ENCODE measurements at regions of chr11 and their contacts with region 1.

Region 1: GRCh38 chr11:66592457-66593302 is at the starts of genes CCDC87 and CCS:
- DNase-seq: peak; percentile 98
- H3K4me3 ChIP-seq: peak within 1 kb of the TSS; percentile 83
- H3K27ac ChIP-seq: peak within 1 kb of the TSS; percentile 74
- H3K4me1 ChIP-seq: 0 out of 2 replicates have a peak, but pooled peaks cover 8% of the 10 kb centered on the region
- H3K27me3 ChIP-seq: no peaks in the 10 kb centered on the region
- total RNA-seq, gene CCDC87: 0.11 and 0.13 TPM in 2 replicates
- total RNA-seq, gene CCS: 28.0 and 29.5 TPM in 2 replicates

Region 2: DNA sequence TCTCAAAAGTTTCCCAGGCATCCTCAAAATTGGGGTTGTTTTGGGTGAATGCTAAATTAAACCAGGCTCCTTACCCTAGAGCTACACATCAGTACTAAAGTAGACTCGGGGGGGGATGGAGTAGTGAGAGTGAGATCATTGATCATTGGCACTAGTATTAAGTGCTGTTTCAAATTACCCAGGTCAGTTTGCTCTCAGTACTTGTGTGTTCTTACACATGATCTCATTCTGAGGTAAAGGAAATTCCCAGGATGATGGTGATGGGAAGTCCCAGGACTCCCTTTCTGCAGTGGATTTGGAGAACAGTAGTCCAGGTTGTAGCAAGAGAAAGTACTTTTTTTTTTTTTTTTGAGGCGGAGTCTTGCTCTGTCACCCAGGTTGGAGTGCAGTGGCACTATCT is 58.3 kb after region 1 on chr11:
- in situ Hi-C with region 1: no loop called
- DNase-seq: peak; percentile 34
- H3K4me3 ChIP-seq: no peak overlapping the region
- H3K27ac ChIP-seq: peak overlapping the region; percentile 9; the same call in 1 of the 2 replicates
- H3K4me1 ChIP-seq: 0 out of 2 replicates have a peak, but pooled peaks cover 4% of the 10 kb centered on the region
- H3K27me3 ChIP-seq: no peaks in the 10 kb centered on the region

Region 3: DNA sequence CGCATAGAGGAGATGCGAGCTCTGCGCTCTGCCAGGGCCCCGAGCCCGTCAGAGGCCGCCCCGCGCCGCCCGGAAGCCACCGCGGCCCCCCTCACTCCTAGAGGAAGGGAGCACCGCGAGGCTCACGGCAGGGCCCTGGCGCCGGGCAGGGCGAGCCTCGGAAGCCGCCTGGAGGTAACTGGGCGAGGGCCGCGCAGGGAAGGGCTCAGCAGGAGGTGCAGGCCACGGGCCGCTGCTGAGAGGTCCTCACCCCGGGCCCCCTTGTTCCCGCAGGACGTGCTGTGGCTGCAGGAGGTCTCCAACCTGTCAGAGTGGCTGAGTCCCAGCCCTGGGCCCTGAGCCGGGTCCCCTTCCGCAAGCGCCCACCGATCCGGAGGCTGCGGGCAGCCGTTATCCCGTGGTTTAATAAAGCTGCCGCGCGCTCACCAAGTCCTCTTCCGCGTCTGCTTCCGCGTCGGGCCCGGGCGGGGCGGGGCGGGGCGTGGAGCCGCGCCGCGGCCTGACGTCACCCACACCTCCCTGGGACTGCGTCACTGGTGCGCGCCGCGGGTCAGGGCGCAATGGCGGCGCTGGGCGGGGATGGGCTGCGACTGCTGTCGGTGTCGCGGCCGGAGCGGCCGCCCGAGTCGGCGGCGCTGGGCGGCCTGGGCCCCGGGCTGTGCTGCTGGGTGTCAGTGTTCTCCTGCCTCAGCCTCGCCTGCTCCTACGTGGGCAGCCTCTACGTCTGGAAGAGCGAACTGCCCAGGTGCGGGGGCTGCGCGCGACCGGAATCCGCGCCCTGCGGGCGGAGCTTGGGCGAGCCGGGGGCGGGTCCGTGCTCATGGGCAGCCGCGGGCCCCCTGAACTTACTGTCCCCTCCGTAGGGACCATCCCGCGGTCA is 250.5 kb after region 1 on chr11 and contains the start of gene RCE1:
- in situ Hi-C with region 1: loop called (anchors 25 kb)
- DNase-seq: peak; percentile 95
- H3K4me3 ChIP-seq: peak within 1 kb of the TSS; percentile 98
- H3K27ac ChIP-seq: peak within 1 kb of the TSS; percentile 91
- H3K4me1 ChIP-seq: peaks cover 14% of the 10 kb centered on the region; the same call in 1 of the 2 replicates
- H3K27me3 ChIP-seq: no peaks in the 10 kb centered on the region
- total RNA-seq, gene RCE1: 10.0 and 19.2 TPM in 2 replicates

Region 4: GRCh38 chr11:67119585-67120391 is 527.1 kb after region 1 on chr11:
- in situ Hi-C with region 1: no loop called
- DNase-seq: peak; percentile 63
- H3K4me3 ChIP-seq: peak overlapping the region; percentile 95
- H3K27ac ChIP-seq: peak overlapping the region; percentile 64
- H3K4me1 ChIP-seq: peaks cover 13% of the 10 kb centered on the region; the same call in 1 of the 2 replicates
- H3K27me3 ChIP-seq: no peaks in the 10 kb centered on the region